Ascending aorta (tissue), 2 donors: ENCODE measurements at regions of chr3 and their contacts with region 1.

Region 1: DNA sequence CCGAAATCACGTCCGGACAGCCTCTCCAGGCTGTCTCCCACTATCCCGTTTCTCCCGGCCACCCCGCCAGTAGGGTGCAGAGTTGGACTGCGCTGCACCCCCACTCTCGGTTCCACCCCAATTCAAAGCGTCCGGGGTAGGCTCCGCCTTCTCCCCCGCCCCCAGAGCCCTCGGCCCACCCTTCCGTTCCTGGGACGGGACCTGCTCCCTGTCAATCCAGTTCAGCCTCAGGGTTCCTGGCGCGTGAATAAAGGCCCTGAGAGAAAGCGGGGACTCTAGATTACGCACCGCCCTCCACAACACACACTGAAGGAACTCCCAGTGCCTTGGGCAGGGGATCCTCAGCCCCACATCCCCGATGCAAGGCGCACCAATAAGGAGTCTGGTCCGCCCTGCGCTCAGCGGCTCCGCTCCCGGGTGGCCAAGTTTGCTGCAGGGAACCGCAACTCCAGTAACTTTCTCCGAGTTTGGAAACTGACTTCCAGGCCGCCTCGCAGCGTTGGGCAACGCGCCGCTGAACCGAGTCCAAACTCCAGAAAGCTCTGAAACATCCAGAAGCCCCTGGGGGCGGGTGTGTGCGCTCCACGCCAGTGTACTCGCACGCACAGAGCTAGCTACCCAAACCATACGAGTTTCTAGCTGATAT is 1.9 kb downstream of the ADAMTS9 start:
- DNase-seq: peak; percentile 73 to 97
- H3K4me3 ChIP-seq: peak overlapping the region; percentile 68 to 85
- H3K27ac ChIP-seq: peak overlapping the region; percentile 96 to 97
- H3K4me1 ChIP-seq: peaks cover 0 to 5% of the 10 kb centered on the region in 2 donors
- H3K27me3 ChIP-seq: no peaks in the 10 kb centered on the region
- CTCF ChIP-seq: peak; percentile 24 to 58 (median 35)

Region 2: GRCh38 chr3:64454179-64454578 is 231.7 kb before region 1 on chr3:
- intact Hi-C with region 1: no loop called
- DNase-seq: no peak
- H3K4me3 ChIP-seq: no peak overlapping the region
- H3K27ac ChIP-seq: no peak overlapping the region
- H3K4me1 ChIP-seq: no peaks in the 10 kb centered on the region
- H3K27me3 ChIP-seq: no peaks in the 10 kb centered on the region
- CTCF ChIP-seq: no peak

Region 3: DNA sequence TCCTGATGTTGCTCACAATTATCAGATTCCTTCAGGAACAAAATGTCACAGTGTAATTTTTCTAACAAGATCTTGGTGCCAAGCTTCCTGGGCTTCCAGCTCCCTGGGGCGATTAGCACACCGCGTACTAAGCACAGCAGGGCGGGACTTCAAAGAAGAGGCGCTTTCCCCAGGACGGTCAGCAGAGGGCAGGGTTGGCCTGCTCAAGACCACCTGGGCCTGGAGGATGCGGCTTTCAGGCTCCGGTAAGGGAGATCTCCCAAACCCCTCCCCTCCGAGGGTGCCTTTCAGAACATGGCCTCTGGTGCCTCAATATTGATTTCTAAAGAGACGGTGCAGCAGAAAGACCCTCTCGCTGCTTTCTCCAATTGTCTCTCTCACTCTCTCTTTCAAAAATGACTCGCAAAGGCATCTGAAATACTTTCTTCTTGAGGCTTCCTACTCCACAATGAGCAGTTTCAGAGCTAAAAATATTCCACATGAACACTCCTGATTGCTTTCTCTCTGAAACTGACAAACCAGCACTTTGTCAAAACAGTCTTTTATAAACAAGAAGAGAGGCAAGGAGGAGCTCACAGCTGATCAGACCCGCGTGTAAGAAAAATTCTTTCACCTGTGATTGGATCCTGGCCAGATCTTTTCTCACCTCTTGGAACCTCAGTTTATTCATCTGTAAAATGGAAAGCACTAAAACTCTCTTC is 152.2 kb before region 1 on chr3:
- intact Hi-C with region 1: loop called (anchors 5 kb)
- DNase-seq: peak; percentile 36 to 93
- H3K4me3 ChIP-seq: peak overlapping the region in 1 of 2 donors; percentile 25
- H3K27ac ChIP-seq: peak overlapping the region in 1 of 2 donors; percentile 41
- H3K4me1 ChIP-seq: peaks cover 0 to 10% of the 10 kb centered on the region in 2 donors
- H3K27me3 ChIP-seq: no peaks in the 10 kb centered on the region
- CTCF ChIP-seq: peak; percentile 73 to 90 (median 82)

Region 4: GRCh38 chr3:64642327-64643151 is 43.4 kb before region 1 on chr3:
- intact Hi-C with region 1: no loop called
- DNase-seq: no peak
- H3K4me3 ChIP-seq: no peak overlapping the region
- H3K27ac ChIP-seq: no peak overlapping the region
- H3K4me1 ChIP-seq: peaks cover 0 to 7% of the 10 kb centered on the region in 2 donors
- H3K27me3 ChIP-seq: no peaks in the 10 kb centered on the region
- CTCF ChIP-seq: no peak

Region 5: DNA sequence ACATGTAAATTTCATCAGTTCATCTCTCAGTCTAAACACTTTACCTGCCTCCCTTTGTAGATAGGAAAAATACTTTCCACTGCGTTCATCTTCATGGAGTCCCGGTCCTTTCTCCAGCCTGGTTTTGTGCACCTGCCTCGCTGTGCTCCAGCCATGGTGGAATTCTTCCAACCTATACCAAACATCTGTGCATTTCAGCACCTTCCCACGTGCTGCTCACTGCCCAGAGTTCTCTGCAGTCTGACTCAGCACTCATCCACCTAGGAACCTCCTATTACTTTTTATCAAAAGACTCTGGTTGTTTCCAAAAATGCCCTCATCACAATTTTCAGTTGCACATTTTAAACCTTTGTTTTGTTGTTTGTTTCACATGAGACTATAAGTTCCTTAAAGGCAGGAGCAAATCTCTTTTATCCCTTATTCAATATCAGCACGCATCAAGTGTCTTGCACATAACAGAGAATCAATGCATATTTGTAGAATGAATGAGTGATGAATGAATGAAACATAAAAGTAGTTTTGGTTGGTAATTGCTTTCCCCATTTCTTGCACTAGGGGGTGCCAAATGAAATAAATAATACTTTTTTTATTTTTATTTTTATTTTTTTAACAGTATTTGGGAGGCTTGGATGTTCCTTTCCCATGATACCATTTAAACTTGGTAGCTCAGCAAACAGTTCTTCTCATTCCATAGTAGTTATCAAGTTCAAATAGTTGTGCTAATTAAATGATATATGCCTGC is 32.1 kb after region 1 on chr3:
- intact Hi-C with region 1: loop called (anchors 2 kb)
- DNase-seq: no peak
- H3K4me3 ChIP-seq: no peak overlapping the region
- H3K27ac ChIP-seq: peak overlapping the region; percentile 79
- H3K4me1 ChIP-seq: peaks cover 6 to 44% of the 10 kb centered on the region in 2 donors
- H3K27me3 ChIP-seq: no peaks in the 10 kb centered on the region
- CTCF ChIP-seq: peak in 2 of 3 experiments; percentile 17 to 30

Region 6: GRCh38 chr3:64759811-64760210 is 73.9 kb after region 1 on chr3:
- intact Hi-C with region 1: loop called (anchors 5 kb)
- DNase-seq: no peak
- H3K4me3 ChIP-seq: no peak overlapping the region
- H3K27ac ChIP-seq: peak overlapping the region; percentile 50 to 51
- H3K4me1 ChIP-seq: peaks cover 3 to 16% of the 10 kb centered on the region in 2 donors
- H3K27me3 ChIP-seq: no peaks in the 10 kb centered on the region
- CTCF ChIP-seq: no peak

Region 7: DNA sequence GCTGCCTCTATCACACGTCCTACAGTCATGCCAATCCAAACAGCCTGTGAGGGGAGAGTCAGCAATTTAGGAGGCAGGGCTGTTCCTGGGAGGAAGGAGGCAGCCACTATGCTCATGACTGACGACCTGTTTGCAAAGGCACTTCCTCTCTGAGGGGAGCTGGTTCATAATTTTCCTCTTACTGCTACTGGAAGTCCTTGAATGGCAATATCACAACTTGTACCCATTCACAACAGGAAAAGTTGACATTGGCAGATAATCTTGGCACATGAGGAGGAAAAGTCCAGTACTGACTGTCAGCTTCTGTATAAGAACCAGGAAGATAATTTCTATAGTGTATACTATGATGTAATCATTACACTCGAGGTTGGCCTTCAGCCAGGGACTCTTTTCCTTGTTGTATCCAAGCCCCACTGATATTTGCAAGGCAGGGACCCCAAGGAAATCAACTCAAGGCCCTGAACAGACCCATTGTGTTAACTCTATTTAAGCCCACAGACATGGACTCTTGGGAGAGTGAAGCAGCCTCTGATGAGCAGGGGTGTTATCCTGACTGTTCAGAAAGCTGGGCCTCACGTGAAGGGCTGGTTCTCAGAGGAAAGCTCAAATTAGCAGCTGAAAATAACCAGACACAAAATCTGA is 269.2 kb after region 1 on chr3:
- intact Hi-C with region 1: loop called (anchors 1 kb)
- DNase-seq: peak in 1 of 2 donors; percentile 77
- H3K4me3 ChIP-seq: no peak overlapping the region
- H3K27ac ChIP-seq: peak overlapping the region; percentile 66 to 67
- H3K4me1 ChIP-seq: peaks cover 4 to 9% of the 10 kb centered on the region in 2 donors
- H3K27me3 ChIP-seq: no peaks in the 10 kb centered on the region
- CTCF ChIP-seq: no peak

Region 8: DNA sequence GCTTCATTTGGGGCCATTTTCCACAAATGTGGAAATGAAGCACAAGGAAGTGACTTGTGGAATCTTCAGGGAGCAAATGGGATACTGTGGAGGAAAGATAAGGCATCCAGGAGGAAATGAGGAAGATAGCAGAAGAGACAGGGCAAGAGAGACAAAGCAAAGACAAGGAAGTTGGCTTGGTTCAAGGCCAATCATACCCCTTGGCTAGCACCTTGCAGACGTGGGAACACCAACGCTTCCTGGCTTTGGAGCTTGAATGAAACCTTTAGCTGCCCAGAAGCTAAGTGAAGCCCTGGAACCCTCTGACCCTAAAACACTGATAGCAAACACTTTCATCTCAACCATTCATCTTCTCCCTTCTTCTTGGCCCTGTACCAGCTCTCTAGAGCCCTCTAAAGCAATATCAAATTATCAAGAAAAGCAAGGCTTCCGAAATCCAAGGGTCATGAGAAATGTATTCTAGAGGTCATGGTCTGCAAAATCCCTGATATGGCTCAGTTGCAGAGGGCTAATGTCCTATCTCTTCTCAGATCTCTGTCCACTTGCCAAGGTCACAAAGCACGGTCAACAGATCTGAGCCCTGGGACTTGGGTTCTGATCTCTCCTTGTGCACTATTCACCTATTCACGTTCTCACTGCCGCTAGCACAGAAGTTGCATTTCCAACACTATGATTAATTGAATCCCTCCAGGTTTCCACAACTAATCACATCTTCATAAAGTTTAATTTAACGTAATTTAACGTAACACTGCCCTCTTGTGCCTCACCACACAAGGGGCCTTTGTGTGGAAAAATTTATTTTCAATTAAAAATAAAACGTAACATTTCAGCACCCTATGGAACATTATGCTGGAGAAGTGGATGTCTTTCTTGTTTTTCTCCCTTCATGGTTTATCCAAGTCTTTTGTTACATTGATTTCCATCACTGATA is 559.5 kb after region 1 on chr3:
- intact Hi-C with region 1: loop called (anchors 10 kb)
- DNase-seq: no peak
- H3K4me3 ChIP-seq: no peak overlapping the region
- H3K27ac ChIP-seq: no peak overlapping the region
- H3K4me1 ChIP-seq: no peaks in the 10 kb centered on the region
- H3K27me3 ChIP-seq: no peaks in the 10 kb centered on the region
- CTCF ChIP-seq: peak in 2 of 3 experiments; percentile 42 to 63